ENCODE measurements at regions of chr6 and their contacts with region 1.

Region 1: GRCh38 chr6:84967389-84967788 is 203.0 kb upstream of the TBX18 start:
- DNase-seq: peak; percentile 75
- H3K4me3 ChIP-seq: no peak overlapping the region
- H3K27ac ChIP-seq: no peak overlapping the region
- H3K4me1 ChIP-seq: no peaks in the 10 kb centered on the region
- H3K27me3 ChIP-seq: no peaks in the 10 kb centered on the region
- CTCF ChIP-seq: peak; percentile 52 to 62
- POLR2A ChIP-seq: no peak

Region 2: GRCh38 chr6:84227434-84228197 is 739.8 kb before region 1 on chr6 and contains the start of gene CEP162:
- CTCF ChIA-PET with region 1: interaction called, 3 read pairs
- POLR2A ChIA-PET with region 1: no interaction called
- dilution Hi-C with region 1: no loop called
- intact Hi-C with region 1: loop called (anchors 1 kb)
- DNase-seq: peak; percentile 95
- H3K4me3 ChIP-seq: peak within 1 kb of the TSS; percentile 57 to 74 (median 67)
- H3K27ac ChIP-seq: peak within 1 kb of the TSS; percentile 14
- H3K4me1 ChIP-seq: peaks cover 7% of the 10 kb centered on the region
- H3K27me3 ChIP-seq: peaks cover 11 to 24% of the 10 kb centered on the region in 2 experiments
- CTCF ChIP-seq: peak; percentile 55 to 62
- POLR2A ChIP-seq: peak; percentile 20
- total RNA-seq, gene CEP162: 8.8 and 10.8 TPM in 2 replicates

Region 3: DNA sequence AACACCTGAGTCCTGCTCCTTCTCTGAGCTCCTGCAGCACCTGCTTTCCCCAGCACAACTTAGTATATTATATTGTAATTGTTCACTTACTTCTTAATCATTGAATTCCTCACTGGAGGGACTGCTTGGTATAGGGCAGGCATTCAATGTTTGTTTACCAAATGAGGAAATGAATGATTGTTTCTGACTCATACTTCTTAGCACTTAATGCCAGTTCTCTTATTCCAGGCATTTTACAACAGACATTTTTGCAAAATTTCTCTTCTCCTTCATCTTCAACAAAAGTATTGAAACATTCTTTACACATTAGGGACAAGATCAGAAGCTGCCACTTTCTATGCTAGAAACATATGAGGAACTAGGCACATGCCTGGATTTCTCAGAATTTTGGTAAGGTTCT is 322.4 kb before region 1 on chr6:
- CTCF ChIA-PET with region 1: no interaction called
- POLR2A ChIA-PET with region 1: no interaction called
- dilution Hi-C with region 1: no loop called
- intact Hi-C with region 1: loop called (anchors 2 kb)
- DNase-seq: peak; percentile 87
- H3K4me3 ChIP-seq: peak overlapping the region in 1 of 3 experiments; percentile 57
- H3K27ac ChIP-seq: peak overlapping the region; percentile 97
- H3K4me1 ChIP-seq: peaks cover 54% of the 10 kb centered on the region
- H3K27me3 ChIP-seq: no peaks in the 10 kb centered on the region
- CTCF ChIP-seq: no peak
- POLR2A ChIP-seq: no peak

Region 4: GRCh38 chr6:84774157-84774984 is 193.0 kb before region 1 on chr6:
- CTCF ChIA-PET with region 1: interaction called, 31 read pairs
- POLR2A ChIA-PET with region 1: no interaction called
- dilution Hi-C with region 1: no loop called
- intact Hi-C with region 1: loop called (anchors 1 kb)
- DNase-seq: peak; percentile 79
- H3K4me3 ChIP-seq: peak overlapping the region; percentile 52 to 55 (median 54)
- H3K27ac ChIP-seq: no peak overlapping the region
- H3K4me1 ChIP-seq: peaks cover 15% of the 10 kb centered on the region
- H3K27me3 ChIP-seq: peaks cover 30 to 76% of the 10 kb centered on the region in 2 experiments
- CTCF ChIP-seq: peak; percentile 79 to 85
- POLR2A ChIP-seq: peak; percentile 35

Measured in endothelial cell of umbilical vein (primary cell).